ENCODE measurements at regions of chr4 and their contacts with region 1.

Region 1: DNA sequence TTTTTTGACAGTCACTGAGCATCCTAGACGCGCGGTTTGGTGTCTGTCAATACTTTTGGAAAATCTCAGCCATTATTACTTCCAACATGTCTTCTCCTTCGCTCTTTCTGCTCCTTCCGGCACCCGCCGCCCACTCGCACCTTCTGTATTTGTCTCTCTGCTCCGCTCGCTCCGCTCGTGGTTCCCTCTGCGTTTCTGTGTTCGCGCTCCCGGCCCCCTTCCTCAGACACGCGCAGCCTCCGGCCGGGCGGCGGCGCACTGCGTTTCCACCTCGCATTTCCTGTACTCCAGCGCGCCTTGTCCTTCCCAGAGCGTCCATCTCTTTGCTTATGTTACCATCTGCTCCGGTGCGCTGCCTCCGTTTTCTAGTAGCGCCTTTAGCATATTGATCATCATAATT is 21.1 kb downstream of the PDE6B start:
- DNase-seq: peak in 8 of 35 experiments; percentile 12 to 45 (median 29)
- ATAC-seq: peak in 3 of 4 experiments; percentile 38 to 76 (median 56)
- H3K4me3 ChIP-seq: no peak overlapping the region
- H3K4me3 Mint-ChIP-seq: peak overlapping the region; percentile 75 to 86 (median 76)
- H3K27ac ChIP-seq: no peak overlapping the region
- H3K27ac Mint-ChIP-seq: peak overlapping the region in 1 of 2 donors; percentile 77
- H3K4me1 ChIP-seq: no peaks in the 10 kb centered on the region
- H3K4me1 Mint-ChIP-seq: peaks cover 5 to 12% (median 5%) of the 10 kb centered on the region in 3 donors
- H3K27me3 ChIP-seq: peaks cover 0 to 54% of the 10 kb centered on the region in 2 experiments
- H3K27me3 Mint-ChIP-seq: peaks cover 14 to 28% of the 10 kb centered on the region in 2 donors

Region 2: DNA sequence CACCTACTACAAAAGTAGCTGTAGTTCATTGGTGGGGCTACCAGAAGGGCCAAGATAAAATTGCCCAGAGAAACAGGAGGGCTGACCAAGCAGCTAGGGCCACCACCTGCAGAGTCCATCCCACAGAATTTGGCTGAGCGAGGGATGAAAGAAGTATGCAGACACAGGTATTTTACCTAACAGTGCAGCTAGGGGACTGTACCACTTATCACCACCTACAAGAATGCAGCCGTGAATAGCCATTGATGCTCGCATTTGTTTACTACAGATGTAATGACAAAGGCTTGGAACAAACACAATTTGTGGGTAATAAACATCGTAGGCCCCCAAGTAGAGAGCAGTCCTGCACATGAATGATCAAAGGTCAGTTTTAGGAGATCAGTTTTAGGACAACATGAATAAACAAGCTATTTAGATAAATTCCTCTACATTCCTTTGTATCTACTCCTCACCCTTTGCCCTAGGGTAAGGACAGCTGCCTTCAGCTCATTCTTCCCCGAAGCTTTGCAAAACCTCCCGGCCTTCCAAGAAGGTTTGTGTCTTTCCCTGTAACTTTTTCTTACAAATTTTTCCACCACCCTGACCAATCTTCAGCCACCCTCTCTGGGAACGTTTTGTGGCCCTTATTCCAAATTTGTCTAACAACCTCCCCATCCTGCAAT is 472.7 kb before region 1 on chr4:
- CTCF ChIA-PET with region 1: no interaction called
- POLR2A ChIA-PET with region 1: no interaction called
- DNase-seq: no peak
- ATAC-seq: no peak
- H3K4me3 ChIP-seq: no peak overlapping the region
- H3K4me3 Mint-ChIP-seq: no peak overlapping the region
- H3K27ac ChIP-seq: no peak overlapping the region
- H3K27ac Mint-ChIP-seq: no peak overlapping the region
- H3K4me1 ChIP-seq: no peaks in the 10 kb centered on the region
- H3K4me1 Mint-ChIP-seq: no peaks in the 10 kb centered on the region
- H3K27me3 ChIP-seq: no peaks in the 10 kb centered on the region
- H3K27me3 Mint-ChIP-seq: no peaks in the 10 kb centered on the region

Region 3: DNA sequence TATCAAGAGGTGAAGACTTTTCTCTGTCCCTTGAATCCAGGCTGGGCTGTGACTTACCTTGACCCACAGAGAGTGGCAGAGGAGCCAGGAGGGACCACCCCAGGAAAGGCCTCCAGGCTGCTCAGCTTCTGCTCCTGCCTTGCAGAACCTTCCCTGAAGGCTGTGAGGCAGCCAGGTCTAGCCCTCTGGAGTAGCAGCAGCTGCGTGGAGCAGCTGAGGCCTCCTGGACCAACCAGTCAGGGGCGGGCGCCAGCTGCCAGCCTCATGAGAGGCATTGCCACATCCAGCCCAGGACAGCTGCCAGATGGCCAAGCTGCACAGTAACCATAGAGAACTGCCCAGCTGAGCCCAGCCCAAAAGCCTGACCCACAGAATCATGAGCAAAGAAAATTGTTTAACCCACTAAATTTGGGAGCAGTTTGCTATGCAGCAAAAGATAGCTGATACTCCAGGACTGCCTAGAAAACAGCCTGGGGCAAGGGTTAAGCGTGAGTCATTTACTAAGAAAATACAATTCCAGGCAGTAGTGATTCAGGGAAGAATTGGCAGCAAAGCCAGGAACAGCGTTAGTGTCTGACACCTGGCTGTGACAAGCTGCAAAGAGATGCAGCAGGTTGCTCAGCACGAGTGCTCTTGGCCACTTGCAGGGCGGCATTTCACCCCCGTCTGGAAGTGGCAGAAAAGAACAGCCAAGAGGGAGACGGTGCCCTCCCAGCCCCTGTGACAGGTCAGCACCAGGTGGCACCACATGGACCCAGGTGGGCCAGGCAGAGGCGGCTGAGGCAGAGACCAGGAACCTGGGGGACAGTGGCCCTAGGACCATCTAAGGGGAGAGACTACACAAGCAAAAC is 35.8 kb before region 1 on chr4:
- CTCF ChIA-PET with region 1: no interaction called
- POLR2A ChIA-PET with region 1: no interaction called
- DNase-seq: peak in 1 of 35 experiments; percentile 19
- ATAC-seq: no peak
- H3K4me3 ChIP-seq: no peak overlapping the region
- H3K4me3 Mint-ChIP-seq: no peak overlapping the region
- H3K27ac ChIP-seq: no peak overlapping the region
- H3K27ac Mint-ChIP-seq: no peak overlapping the region
- H3K4me1 ChIP-seq: no peaks in the 10 kb centered on the region
- H3K4me1 Mint-ChIP-seq: no peaks in the 10 kb centered on the region
- H3K27me3 ChIP-seq: peaks cover 0 to 45% of the 10 kb centered on the region in 2 experiments
- H3K27me3 Mint-ChIP-seq: peaks cover 9 to 26% of the 10 kb centered on the region in 2 donors

Region 4: GRCh38 chr4:705278-706082 is 59.0 kb after region 1 on chr4 and contains the start of gene PCGF3:
- CTCF ChIA-PET with region 1: no interaction called
- POLR2A ChIA-PET with region 1: no interaction called
- DNase-seq: peak; percentile 85 to 96 (median 93)
- ATAC-seq: peak; percentile 93 to 97 (median 96)
- H3K4me3 ChIP-seq: peak within 1 kb of the TSS; percentile 67 to 74
- H3K4me3 Mint-ChIP-seq: peak within 1 kb of the TSS; percentile 76 to 80 (median 77)
- H3K27ac ChIP-seq: peak within 1 kb of the TSS; percentile 76
- H3K27ac Mint-ChIP-seq: peak within 1 kb of the TSS; percentile 43 to 76
- H3K4me1 ChIP-seq: peaks cover 3 to 34% of the 10 kb centered on the region in 2 experiments
- H3K4me1 Mint-ChIP-seq: peaks cover 20 to 29% (median 25%) of the 10 kb centered on the region in 3 donors
- H3K27me3 ChIP-seq: peaks cover 0 to 2% of the 10 kb centered on the region in 2 experiments
- H3K27me3 Mint-ChIP-seq: no peaks in the 10 kb centered on the region
- total RNA-seq, gene PCGF3: 47.0 to 76.9 (median 51.1) TPM

Region 5: GRCh38 chr4:1072830-1073446 is 426.5 kb after region 1 on chr4:
- CTCF ChIA-PET with region 1: no interaction called
- POLR2A ChIA-PET with region 1: interaction called in 1 of 2 experiments, 10 read pairs
- DNase-seq: peak; percentile 12 to 70 (median 45)
- ATAC-seq: peak; percentile 89 to 99 (median 94)
- H3K4me3 ChIP-seq: no peak overlapping the region
- H3K4me3 Mint-ChIP-seq: no peak overlapping the region
- H3K27ac ChIP-seq: no peak overlapping the region
- H3K27ac Mint-ChIP-seq: peak overlapping the region; percentile 7 to 23
- H3K4me1 ChIP-seq: peaks cover 3 to 9% of the 10 kb centered on the region in 2 experiments
- H3K4me1 Mint-ChIP-seq: peaks cover 12 to 14% (median 12%) of the 10 kb centered on the region in 3 donors
- H3K27me3 ChIP-seq: peaks cover 0 to 24% of the 10 kb centered on the region in 2 experiments
- H3K27me3 Mint-ChIP-seq: peaks cover 19 to 29% of the 10 kb centered on the region in 2 donors